ENCODE measurements at regions of chr10 and their contacts with region 1.

Region 1: GRCh38 chr10:128047351-128047750 is 78.9 kb downstream of the MKI67 start:
- DNase-seq: peak; percentile 79 to 90 (median 86)
- H3K4me3 ChIP-seq: peak overlapping the region in 6 of 7 experiments; percentile 57 to 84 (median 66)
- H3K27ac ChIP-seq: peak overlapping the region; percentile 84 to 91
- H3K4me1 ChIP-seq: peaks cover 33 to 70% (median 46%) of the 10 kb centered on the region in 4 experiments
- H3K27me3 ChIP-seq: no peaks in the 10 kb centered on the region

Region 2: DNA sequence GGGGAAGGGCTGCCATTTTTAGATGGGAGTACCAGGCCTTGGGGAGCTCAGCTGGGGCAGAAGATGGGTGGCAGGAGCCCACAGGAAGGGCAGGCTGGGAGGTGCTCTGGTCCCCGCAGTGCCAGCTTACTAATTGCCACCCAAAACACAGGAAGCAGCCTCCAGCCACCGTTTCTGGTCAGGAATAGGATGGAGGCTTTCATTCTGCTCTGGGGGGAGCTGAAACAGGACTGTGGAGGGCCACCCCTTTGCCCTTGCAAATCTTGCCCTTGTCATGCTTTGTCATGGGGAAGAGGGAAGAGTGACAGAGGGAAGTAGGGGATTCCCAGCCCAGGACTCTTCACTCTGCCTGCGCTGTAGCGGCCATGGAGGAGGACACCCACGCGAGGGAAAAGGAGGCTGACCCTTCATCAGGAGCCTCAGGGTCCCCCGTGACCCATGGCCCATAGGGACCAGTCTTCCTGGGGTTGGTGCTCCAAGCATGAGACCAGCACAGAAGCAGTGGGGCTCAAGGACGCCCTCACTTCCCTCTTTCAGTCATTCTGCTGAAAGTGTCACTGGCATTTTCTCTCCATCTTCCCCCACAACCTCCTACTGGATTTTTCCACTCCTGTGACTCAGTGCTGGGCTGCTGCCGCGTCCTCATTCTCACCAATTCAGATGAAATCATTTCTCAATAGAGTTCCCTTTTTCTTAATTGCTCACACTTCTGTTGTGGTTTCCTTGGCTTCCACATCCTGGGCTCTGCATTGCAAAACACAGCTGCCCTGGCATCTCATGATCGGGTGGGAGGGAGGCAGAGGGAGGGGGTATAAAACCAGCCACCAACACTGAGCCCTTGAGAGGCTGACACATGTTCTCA is 17.0 kb after region 1 on chr10:
- CTCF ChIA-PET with region 1: interaction called, 288 read pairs
- POLR2A ChIA-PET with region 1: interaction called, 102 read pairs
- DNase-seq: peak; percentile 94 to 99 (median 98)
- H3K4me3 ChIP-seq: peak overlapping the region in 4 of 7 experiments; percentile 8 to 57 (median 34)
- H3K27ac ChIP-seq: peak overlapping the region; percentile 51 to 84
- H3K4me1 ChIP-seq: peaks cover 26 to 74% (median 49%) of the 10 kb centered on the region in 4 experiments
- H3K27me3 ChIP-seq: no peaks in the 10 kb centered on the region

Measured in common myeloid progenitor, CD34-positive (primary cell).